ENCODE measurements at regions of chr1 and their contacts with region 1.

Region 1: GRCh38 chr1:109984456-109985275 is at the start of gene AHCYL1:
- DNase-seq: peak; percentile 87
- H3K4me3 ChIP-seq: peak within 1 kb of the TSS; percentile 82
- CTCF ChIP-seq: peak; percentile 97

Region 2: DNA sequence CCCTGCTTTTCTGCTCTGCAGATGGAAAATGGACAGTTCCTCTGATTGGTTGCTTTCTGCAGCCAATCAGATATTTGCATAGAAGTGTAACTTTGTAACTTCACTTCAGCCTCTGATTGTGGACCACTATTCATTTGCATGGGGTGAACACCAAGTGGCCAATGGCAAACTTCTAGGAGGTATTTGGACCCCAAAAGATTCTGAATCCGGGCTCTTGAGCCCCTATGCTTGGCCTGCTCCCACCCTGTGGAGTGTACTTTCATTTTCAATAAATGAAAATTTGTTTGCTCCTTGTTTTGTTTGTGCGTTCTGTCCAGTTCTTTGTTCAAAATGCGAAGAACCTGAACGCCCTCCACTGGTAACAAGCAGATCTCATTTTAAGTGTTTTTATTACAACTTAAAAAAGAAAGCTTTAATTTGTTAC is 335.2 kb before region 1 on chr1:
- CTCF ChIA-PET with region 1: interaction called, 30 read pairs
- POLR2A ChIA-PET with region 1: no interaction called
- DNase-seq: no peak
- H3K4me3 ChIP-seq: no peak overlapping the region
- CTCF ChIP-seq: no peak

Region 3: DNA sequence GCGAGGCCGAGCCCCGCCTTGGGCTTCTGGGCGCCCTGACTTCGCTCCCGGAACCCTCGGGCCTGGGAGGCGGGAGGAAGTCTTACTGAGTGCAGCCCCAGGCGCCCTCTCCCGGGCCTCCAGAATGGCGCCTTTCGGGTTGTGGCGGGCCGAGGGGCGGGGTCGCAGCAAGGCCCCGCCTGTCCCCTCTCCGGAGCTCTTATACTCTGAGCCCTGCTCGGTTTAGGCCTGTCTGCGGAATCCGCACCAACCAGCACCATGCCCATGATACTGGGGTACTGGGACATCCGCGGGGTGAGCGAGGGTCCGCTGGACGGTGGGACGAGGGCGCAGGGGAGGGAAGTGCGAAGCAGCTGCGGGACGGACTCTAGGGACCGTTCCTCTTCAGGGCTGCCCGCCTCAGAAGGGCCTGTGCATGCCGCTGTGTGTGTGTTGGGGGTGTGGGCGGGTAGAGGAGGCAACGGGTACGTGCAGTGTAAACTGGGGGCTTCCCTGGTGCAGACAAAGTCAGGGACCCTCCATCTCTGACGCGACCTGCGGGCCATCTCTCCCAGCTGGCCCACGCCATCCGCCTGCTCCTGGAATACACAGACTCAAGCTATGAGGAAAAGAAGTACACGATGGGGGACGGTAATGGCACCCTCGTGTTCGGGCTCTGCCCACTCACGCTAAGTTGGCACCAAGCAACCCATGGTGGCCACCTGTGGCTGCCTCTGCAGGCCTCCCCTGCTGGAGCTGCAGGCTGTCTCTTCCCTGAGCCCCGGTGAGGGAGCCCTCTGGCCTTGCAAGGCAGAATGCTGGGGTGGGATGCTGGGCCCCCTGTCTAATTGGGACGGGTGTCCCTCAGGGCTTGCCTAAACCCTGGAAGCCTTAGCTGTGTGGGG is 296.8 kb before region 1 on chr1 and contains the start of gene GSTM1:
- CTCF ChIA-PET with region 1: no interaction called
- POLR2A ChIA-PET with region 1: no interaction called
- DNase-seq: no peak
- H3K4me3 ChIP-seq: no peak within 1 kb of the TSS
- CTCF ChIP-seq: no peak

Region 4: GRCh38 chr1:109807822-109808680 is 176.6 kb before region 1 on chr1:
- CTCF ChIA-PET with region 1: interaction called, 21 read pairs
- POLR2A ChIA-PET with region 1: interaction called, 4 read pairs
- DNase-seq: no peak
- H3K4me3 ChIP-seq: no peak overlapping the region
- CTCF ChIP-seq: no peak

Region 5: GRCh38 chr1:109904105-109904817 is 80.4 kb before region 1 on chr1:
- CTCF ChIA-PET with region 1: interaction called, 14 read pairs
- POLR2A ChIA-PET with region 1: no interaction called
- DNase-seq: no peak
- H3K4me3 ChIP-seq: no peak overlapping the region
- CTCF ChIP-seq: no peak

Region 6: GRCh38 chr1:109923131-109923945 is 61.3 kb before region 1 on chr1:
- CTCF ChIA-PET with region 1: interaction called, 42 read pairs
- POLR2A ChIA-PET with region 1: interaction called, 3 read pairs
- DNase-seq: no peak
- H3K4me3 ChIP-seq: no peak overlapping the region
- CTCF ChIP-seq: peak; percentile 56

Region 7: DNA sequence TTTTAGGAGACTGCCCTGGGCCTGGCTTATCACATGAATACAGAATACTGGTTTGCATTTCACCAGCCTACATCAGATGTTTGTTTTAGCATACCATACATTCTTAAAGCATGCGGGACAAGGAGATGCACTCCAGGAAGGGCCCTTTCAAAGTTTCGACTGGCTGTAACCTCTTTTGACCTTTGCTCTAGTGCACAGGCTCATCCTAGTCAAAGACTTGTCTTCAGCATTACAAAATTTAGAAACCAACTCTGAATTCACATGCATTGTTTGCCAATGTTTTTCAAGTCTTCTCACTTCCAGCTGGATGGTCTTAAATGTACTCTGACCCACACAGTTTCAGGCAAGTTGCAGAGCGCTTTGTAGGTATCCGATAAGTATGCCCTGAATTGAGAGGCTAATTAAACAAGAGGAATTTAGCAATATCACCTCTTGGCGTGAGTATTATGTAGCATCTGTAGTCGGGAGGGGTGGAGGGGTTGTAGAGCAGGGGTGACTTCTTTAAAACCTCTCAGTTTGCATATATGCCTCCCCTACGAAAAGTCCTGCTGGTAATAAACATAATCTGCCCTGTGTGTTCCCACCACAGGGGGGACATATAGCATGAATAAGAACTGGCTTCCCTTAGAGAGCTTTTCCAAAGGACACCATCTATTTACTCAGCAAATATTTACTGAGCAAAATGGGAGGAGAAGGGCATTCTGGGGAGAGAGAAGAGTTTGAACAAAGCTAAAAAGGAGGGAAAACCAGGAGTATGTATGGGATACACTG is 24.5 kb before region 1 on chr1:
- CTCF ChIA-PET with region 1: interaction called, 30 read pairs
- POLR2A ChIA-PET with region 1: no interaction called
- DNase-seq: peak; percentile 46
- H3K4me3 ChIP-seq: no peak overlapping the region
- CTCF ChIP-seq: no peak

Region 8: GRCh38 chr1:110011527-110012041 is 26.9 kb after region 1 on chr1:
- CTCF ChIA-PET with region 1: interaction called, 58 read pairs
- POLR2A ChIA-PET with region 1: interaction called, 3 read pairs
- DNase-seq: no peak
- H3K4me3 ChIP-seq: no peak overlapping the region
- CTCF ChIP-seq: peak; percentile 61

Region 9: DNA sequence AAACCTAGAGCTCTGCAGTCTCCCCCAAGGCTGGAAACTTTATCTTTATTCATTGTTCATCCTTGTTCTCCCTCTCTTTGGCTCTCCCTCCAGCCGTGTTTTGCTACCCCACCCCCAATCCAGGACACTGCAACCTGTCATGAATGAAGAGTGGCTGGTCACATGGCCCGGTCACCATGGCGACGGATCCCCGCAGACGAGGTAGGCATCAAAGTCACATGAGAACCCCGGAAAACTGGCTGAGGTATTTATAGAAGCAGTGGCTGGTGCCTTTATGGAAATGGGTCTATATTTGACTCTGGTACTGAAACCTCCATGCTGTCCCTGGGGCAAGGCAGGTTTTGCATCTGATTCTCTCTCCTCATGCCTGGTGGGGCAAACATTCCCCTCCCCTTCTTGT is 152.2 kb after region 1 on chr1:
- CTCF ChIA-PET with region 1: no interaction called
- POLR2A ChIA-PET with region 1: no interaction called
- DNase-seq: no peak
- H3K4me3 ChIP-seq: no peak overlapping the region
- CTCF ChIP-seq: no peak